ENCODE measurements at regions of chr14 and their contacts with region 1.

Region 1: DNA sequence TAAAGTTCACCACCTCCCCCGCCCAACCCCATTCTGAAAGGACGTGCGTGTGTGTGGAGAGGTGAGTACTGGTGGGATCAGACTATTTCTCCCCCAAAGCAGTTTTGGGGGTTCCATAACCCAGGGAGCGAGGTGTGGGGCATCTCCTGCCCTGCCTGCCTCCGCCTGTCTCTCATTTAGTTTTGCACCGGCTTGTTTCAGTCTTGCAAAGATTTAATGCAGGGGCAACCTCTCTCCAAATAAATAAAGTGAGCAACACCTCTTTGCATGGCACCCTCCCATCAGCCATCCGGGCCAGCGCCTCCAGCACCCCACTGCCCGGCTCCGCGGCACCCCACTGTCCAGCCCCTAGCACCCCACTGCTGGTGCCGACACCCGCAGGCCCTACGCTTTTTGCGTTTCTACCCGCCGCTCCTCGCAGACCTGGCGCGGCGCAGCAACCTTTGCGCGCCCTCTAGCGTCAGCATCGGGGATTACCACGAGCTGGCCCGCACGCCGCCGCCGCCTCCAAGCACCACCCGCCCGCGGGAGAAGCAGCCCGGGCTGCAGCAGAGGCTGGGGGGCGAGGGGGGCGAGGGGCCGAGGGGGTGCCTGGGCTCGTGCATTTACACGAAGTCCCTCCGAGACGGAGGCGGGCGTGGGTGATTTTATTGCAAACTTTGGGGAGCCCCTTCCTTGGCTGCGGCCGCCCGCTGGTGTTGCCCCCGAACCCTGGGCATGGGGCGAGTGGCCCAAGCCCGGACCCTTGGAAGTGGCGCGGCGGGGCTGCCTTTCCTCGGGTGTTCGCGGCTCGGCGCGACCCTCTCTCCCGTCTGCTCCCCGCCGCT is 55.8 kb upstream of the VRK1 start:
- DNase-seq: peak; percentile 54 to 67 (median 60)
- ATAC-seq: peak; percentile 82
- H3K4me3 ChIP-seq: peak overlapping the region in 1 of 2 donors; percentile 10
- H3K27ac ChIP-seq: no peak overlapping the region
- H3K4me1 ChIP-seq: peaks cover 8% of the 10 kb centered on the region
- H3K27me3 ChIP-seq: no peaks in the 10 kb centered on the region
- CTCF ChIP-seq: peak; percentile 75 to 96 (median 84)
- POLR2A ChIP-seq: no peak

Region 2: GRCh38 chr14:96584199-96584906 is 157.0 kb before region 1 on chr14:
- intact Hi-C with region 1: loop called (anchors 10 kb)
- DNase-seq: peak; percentile 41 to 65 (median 46)
- ATAC-seq: peak; percentile 76
- H3K4me3 ChIP-seq: no peak overlapping the region
- H3K27ac ChIP-seq: no peak overlapping the region
- H3K4me1 ChIP-seq: no peaks in the 10 kb centered on the region
- H3K27me3 ChIP-seq: no peaks in the 10 kb centered on the region
- CTCF ChIP-seq: peak; percentile 25 to 70 (median 52)
- POLR2A ChIP-seq: no peak

Region 3: DNA sequence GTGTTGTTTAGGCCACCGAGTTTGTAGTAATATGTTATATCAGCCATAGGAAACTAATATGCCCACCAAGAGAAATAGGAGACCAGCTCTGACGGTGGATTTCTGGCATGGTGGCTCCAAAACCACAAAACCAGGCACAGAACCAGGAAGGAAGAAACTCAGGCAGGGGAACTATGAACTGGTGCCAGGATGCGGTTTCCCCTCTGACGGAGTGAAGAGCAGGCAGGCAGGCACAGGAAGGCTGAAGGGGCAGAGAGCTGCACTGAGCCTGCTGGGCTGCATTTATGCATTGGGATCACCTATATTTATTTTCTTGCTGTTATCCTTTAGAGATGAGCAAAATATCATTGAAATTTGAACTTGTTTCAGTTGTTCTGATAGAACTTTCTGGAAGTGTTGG is 535.2 kb after region 1 on chr14:
- intact Hi-C with region 1: no loop called
- DNase-seq: no peak
- ATAC-seq: no peak
- H3K4me3 ChIP-seq: no peak overlapping the region
- H3K27ac ChIP-seq: no peak overlapping the region
- H3K4me1 ChIP-seq: no peaks in the 10 kb centered on the region
- H3K27me3 ChIP-seq: no peaks in the 10 kb centered on the region
- CTCF ChIP-seq: no peak
- POLR2A ChIP-seq: no peak

Measured in body of pancreas (tissue), 4 donors.